ENCODE measurements at regions of chr1 and their contacts with region 1.

Region 1: GRCh38 chr1:173476664-173477285 is 360 bp upstream of the PRDX6 start:
- DNase-seq: peak; percentile 92 to 95
- H3K4me3 ChIP-seq: peak overlapping the region; percentile 89
- H3K4me3 Mint-ChIP-seq: peak overlapping the region; percentile 93
- H3K27ac Mint-ChIP-seq: peak overlapping the region; percentile 97
- H3K4me1 ChIP-seq: peaks cover 32% of the 10 kb centered on the region
- H3K4me1 Mint-ChIP-seq: peaks cover 41% of the 10 kb centered on the region
- H3K27me3 ChIP-seq: no peaks in the 10 kb centered on the region
- H3K27me3 Mint-ChIP-seq: no peaks in the 10 kb centered on the region
- CTCF ChIP-seq: no peak

Region 2: DNA sequence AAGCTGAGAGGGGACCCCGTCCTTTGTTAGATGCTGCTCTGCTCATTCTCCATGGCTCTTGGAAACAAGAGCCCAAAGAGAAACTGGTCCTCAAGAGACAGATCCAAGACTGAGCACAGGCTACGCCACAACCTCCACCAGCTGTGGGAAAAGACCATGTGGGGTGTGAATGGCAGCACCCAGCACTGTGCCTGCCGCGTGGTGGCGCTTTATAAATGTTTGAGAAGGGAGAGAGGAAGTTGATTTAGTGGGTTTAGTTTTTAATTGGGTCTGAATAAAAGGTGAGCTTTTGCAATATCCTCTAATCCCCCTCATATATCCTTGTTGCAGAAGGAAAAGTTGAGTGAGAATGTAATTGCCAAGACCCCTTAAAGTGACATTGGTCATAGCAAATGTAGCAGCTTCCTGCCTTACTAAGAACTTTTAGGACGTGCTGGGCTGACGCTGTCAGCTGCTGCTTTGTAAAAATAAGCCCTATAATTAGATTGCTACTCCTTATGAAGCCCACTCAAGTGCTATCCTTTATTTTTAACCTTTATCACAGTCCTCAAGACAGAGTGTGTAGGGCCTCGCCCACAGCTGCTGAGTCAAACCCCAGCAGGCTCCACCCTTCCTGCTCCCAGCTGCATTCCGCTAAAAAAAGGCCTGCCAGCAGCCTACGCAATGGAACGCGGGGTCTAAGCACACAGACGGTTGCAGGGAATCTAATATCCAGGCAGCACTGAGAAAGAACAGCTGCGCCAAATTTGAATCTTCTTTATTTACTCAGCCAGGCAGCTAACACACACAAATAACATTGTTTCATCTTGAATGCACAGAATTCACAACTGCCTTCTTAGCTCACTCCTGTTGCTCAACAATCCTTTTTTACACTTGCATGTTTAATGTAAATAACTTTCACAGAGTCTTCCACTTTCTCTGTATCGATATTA is 47.0 kb before region 1 on chr1:
- CTCF ChIA-PET with region 1: no interaction called
- POLR2A ChIA-PET with region 1: interaction called, 4 read pairs
- intact Hi-C with region 1: loop called (anchors 1 kb)
- DNase-seq: peak; percentile 28 to 52
- H3K4me3 ChIP-seq: no peak overlapping the region
- H3K4me3 Mint-ChIP-seq: no peak overlapping the region
- H3K27ac Mint-ChIP-seq: peak overlapping the region; percentile 23
- H3K4me1 ChIP-seq: peaks cover 42% of the 10 kb centered on the region
- H3K4me1 Mint-ChIP-seq: peaks cover 24% of the 10 kb centered on the region
- H3K27me3 ChIP-seq: no peaks in the 10 kb centered on the region
- H3K27me3 Mint-ChIP-seq: no peaks in the 10 kb centered on the region
- CTCF ChIP-seq: no peak

Region 3: GRCh38 chr1:173489149-173489934 is 12.6 kb after region 1 on chr1:
- CTCF ChIA-PET with region 1: interaction called, 3 read pairs
- POLR2A ChIA-PET with region 1: interaction called, 8 read pairs
- intact Hi-C with region 1: loop called (anchors 1 kb)
- DNase-seq: peak; percentile 80
- H3K4me3 ChIP-seq: no peak overlapping the region
- H3K4me3 Mint-ChIP-seq: no peak overlapping the region
- H3K27ac Mint-ChIP-seq: peak overlapping the region; percentile 65
- H3K4me1 ChIP-seq: peaks cover 20% of the 10 kb centered on the region
- H3K4me1 Mint-ChIP-seq: peaks cover 14% of the 10 kb centered on the region
- H3K27me3 ChIP-seq: no peaks in the 10 kb centered on the region
- H3K27me3 Mint-ChIP-seq: no peaks in the 10 kb centered on the region
- CTCF ChIP-seq: no peak

Region 4: GRCh38 chr1:173499729-173500128 is 23.0 kb after region 1 on chr1:
- CTCF ChIA-PET with region 1: no interaction called
- POLR2A ChIA-PET with region 1: no interaction called
- intact Hi-C with region 1: no loop called
- DNase-seq: no peak
- H3K4me3 ChIP-seq: no peak overlapping the region
- H3K4me3 Mint-ChIP-seq: no peak overlapping the region
- H3K27ac Mint-ChIP-seq: no peak overlapping the region
- H3K4me1 ChIP-seq: no peaks in the 10 kb centered on the region
- H3K4me1 Mint-ChIP-seq: no peaks in the 10 kb centered on the region
- H3K27me3 ChIP-seq: no peaks in the 10 kb centered on the region; the same call in 1 of the 2 replicates
- H3K27me3 Mint-ChIP-seq: no peaks in the 10 kb centered on the region
- CTCF ChIP-seq: no peak

Region 5: DNA sequence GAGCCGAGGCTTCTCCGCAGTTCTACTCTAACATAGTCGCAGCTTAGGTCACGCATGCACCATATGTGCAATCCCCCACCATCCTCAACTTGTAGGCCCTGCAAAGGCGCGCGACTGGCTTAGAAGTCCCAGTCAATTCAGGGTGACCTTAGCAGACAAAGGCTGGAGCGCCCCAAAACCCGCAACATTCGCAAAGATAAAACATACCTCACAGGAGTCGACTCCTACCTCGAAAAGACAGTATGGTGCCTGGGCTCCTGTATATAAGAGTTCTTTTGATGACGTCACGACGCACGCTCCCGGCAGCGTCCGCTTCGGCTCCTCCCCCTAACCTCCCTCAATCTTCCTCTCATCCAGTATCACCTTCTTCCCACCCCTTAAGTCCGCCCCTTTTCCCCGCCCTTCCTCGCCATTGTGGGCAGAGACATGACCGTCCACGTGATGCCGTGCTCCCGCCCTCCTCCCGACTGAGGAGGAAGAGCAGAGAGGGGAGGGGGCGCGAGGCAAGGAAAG is 391.0 kb after region 1 on chr1 and contains the start of gene GAS5:
- CTCF ChIA-PET with region 1: no interaction called
- POLR2A ChIA-PET with region 1: interaction called, 7 read pairs
- intact Hi-C with region 1: loop called (anchors 2 kb)
- DNase-seq: peak; percentile 99 to 100
- H3K4me3 ChIP-seq: peak within 1 kb of the TSS; percentile 82
- H3K4me3 Mint-ChIP-seq: peak within 1 kb of the TSS; percentile 99
- H3K27ac Mint-ChIP-seq: peak within 1 kb of the TSS; percentile 100
- H3K4me1 ChIP-seq: peaks cover 13% of the 10 kb centered on the region; the same call in 1 of the 2 replicates
- H3K4me1 Mint-ChIP-seq: peaks cover 12% of the 10 kb centered on the region
- H3K27me3 ChIP-seq: no peaks in the 10 kb centered on the region
- H3K27me3 Mint-ChIP-seq: peaks cover 5% of the 10 kb centered on the region
- CTCF ChIP-seq: no peak
- total RNA-seq, gene GAS5: 559 and 641 TPM in 2 replicates

Region 6: DNA sequence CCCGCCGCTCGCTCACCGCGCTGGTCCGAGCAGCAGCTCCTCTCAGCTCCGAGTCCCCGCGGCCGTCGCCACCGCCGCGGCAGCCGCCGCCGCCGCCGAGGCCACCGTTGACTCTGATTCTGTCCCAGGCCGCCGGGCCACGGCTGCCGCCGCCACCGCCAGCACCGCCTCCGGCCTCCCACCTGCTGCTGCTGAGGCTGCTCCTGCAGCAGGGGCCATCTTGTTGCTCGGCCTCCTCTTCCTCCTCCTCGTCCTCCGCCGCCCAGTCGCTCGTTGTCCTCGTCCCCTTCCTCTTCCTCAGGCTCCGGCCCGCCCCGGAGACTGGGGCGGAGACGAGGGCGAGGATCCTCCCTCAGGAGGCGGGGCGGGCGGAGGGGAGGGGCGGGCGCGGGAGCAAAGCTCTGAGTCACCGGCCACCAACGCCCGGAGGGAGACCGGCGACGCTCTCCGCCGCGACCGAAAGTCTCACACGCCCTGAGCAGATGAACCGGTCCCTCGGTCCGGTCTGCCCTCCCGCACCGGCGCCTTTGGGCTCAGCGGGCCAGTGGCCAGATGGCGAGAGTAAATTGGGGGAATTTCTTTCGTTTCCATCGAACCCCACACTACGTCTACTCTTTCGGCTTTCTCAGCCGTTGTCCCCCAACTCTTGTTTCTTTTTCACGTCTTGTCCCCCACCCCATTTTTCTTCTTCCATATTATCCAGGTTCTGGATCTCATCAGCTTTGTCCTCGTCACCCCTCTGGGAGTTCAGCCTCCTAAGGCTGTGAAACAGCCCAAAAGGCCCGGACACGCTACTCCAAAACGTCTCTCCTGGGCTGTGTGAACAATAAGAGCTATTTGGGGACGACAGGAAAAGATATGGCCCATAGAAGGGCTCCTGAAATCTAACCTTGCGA is 545.6 kb after region 1 on chr1 and contains the start of gene RC3H1:
- CTCF ChIA-PET with region 1: no interaction called
- POLR2A ChIA-PET with region 1: no interaction called
- intact Hi-C with region 1: loop called (anchors 5 kb)
- DNase-seq: peak; percentile 88
- H3K4me3 ChIP-seq: peak within 1 kb of the TSS; percentile 83
- H3K4me3 Mint-ChIP-seq: peak within 1 kb of the TSS; percentile 84
- H3K27ac Mint-ChIP-seq: peak within 1 kb of the TSS; percentile 97
- H3K4me1 ChIP-seq: peaks cover 14% of the 10 kb centered on the region
- H3K4me1 Mint-ChIP-seq: peaks cover 7% of the 10 kb centered on the region
- H3K27me3 ChIP-seq: no peaks in the 10 kb centered on the region
- H3K27me3 Mint-ChIP-seq: no peaks in the 10 kb centered on the region
- CTCF ChIP-seq: no peak
- total RNA-seq, gene RC3H1: 29.2 and 36.3 TPM in 2 replicates

Region 7: GRCh38 chr1:174230399-174230798 is 753.6 kb after region 1 on chr1:
- CTCF ChIA-PET with region 1: no interaction called
- POLR2A ChIA-PET with region 1: no interaction called
- intact Hi-C with region 1: loop called (anchors 10 kb)
- DNase-seq: no peak
- H3K4me3 ChIP-seq: no peak overlapping the region
- H3K4me3 Mint-ChIP-seq: no peak overlapping the region
- H3K27ac Mint-ChIP-seq: no peak overlapping the region
- H3K4me1 ChIP-seq: no peaks in the 10 kb centered on the region
- H3K4me1 Mint-ChIP-seq: no peaks in the 10 kb centered on the region
- H3K27me3 ChIP-seq: no peaks in the 10 kb centered on the region
- H3K27me3 Mint-ChIP-seq: no peaks in the 10 kb centered on the region
- CTCF ChIP-seq: no peak

Measured in Caco-2 (cell line).